A549 (cell line): ENCODE measurements at regions of chr2 and their contacts with region 1.

Region 1: DNA sequence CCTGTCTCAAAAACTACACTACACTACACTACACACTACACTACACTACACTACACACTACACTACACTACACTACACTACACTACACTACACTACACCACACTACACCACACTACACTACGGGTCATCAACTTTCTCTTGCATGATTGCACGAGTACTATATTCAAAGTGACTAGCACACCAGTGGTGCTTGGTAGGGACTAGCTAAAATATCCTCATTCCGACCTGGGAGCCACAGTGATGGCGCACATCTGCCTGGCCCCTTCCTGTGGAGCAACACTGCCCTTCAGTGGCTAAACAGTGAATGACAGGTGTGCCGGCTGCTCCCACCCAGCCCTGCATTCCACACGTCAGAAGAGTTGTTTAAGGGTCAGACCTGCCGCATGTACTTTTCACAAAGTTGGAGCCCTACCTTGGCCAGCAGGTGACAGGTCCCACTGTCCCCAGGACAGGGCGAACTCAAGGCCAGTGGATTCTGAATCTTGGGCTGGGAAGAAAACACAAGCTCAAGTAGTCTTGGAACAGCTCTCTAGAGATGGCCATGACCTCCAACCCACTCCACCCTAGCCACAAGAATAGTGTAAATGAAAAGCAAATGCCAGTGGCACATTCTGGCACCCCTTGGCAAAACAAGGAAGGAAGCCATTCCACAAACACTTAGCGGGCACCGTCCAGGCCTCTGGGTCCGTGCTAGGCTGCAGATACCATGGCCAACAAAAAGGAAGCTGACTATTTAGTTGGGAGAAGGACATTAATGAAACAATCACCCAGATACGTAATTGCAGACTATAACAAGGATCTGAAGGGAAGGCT is 79.7 kb upstream of the MSH2 start:
- DNase-seq: peak; percentile 81 to 92
- ATAC-seq: peak; percentile 89 to 93
- H3K4me3 ChIP-seq: no peak overlapping the region
- H3K27ac ChIP-seq: peak overlapping the region; percentile 48 to 77
- H3K4me1 ChIP-seq: peaks cover 44% of the 10 kb centered on the region
- CTCF ChIP-seq: peak; percentile 97
- EP300 ChIP-seq: no peak
- POLR2A ChIP-seq: no peak
- RAD21 ChIP-seq: peak; percentile 99 to 100

Region 2: DNA sequence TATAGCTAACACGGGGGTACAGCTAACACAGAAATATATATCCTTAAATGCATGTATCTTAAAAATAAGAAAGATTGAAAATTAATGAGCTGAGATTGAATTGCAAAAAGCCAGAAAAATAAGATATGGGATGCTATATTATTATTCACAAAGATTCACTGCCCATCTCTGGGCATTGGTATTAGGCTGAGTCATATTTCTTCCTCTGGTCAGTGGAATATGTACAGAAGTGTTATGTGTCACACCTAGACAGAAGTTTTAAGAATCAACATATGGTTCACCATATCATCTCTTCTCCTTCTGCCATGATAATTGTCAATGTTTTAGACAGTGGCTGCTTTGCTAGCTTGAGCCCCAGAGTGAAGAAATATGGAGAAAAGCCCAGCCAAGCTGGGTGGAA is 393.6 kb before region 1 on chr2:
- CTCF ChIA-PET with region 1: interaction called, 26 read pairs
- POLR2A ChIA-PET with region 1: no interaction called
- DNase-seq: no peak
- ATAC-seq: no peak
- H3K4me3 ChIP-seq: no peak overlapping the region
- H3K27ac ChIP-seq: no peak overlapping the region
- H3K4me1 ChIP-seq: no peaks in the 10 kb centered on the region
- CTCF ChIP-seq: no peak
- EP300 ChIP-seq: no peak
- POLR2A ChIP-seq: no peak
- RAD21 ChIP-seq: no peak

Region 3: GRCh38 chr2:47016172-47016913 is 306.9 kb before region 1 on chr2:
- CTCF ChIA-PET with region 1: interaction called, 106 read pairs
- POLR2A ChIA-PET with region 1: no interaction called
- DNase-seq: peak; percentile 82 to 84
- ATAC-seq: peak; percentile 79 to 81
- H3K4me3 ChIP-seq: no peak overlapping the region
- H3K27ac ChIP-seq: peak overlapping the region; percentile 18 to 78
- H3K4me1 ChIP-seq: peaks cover 29% of the 10 kb centered on the region
- CTCF ChIP-seq: no peak
- EP300 ChIP-seq: no peak
- POLR2A ChIP-seq: no peak
- RAD21 ChIP-seq: peak; percentile 31 to 50; a peak in 3 of 5 replicates

Region 4: DNA sequence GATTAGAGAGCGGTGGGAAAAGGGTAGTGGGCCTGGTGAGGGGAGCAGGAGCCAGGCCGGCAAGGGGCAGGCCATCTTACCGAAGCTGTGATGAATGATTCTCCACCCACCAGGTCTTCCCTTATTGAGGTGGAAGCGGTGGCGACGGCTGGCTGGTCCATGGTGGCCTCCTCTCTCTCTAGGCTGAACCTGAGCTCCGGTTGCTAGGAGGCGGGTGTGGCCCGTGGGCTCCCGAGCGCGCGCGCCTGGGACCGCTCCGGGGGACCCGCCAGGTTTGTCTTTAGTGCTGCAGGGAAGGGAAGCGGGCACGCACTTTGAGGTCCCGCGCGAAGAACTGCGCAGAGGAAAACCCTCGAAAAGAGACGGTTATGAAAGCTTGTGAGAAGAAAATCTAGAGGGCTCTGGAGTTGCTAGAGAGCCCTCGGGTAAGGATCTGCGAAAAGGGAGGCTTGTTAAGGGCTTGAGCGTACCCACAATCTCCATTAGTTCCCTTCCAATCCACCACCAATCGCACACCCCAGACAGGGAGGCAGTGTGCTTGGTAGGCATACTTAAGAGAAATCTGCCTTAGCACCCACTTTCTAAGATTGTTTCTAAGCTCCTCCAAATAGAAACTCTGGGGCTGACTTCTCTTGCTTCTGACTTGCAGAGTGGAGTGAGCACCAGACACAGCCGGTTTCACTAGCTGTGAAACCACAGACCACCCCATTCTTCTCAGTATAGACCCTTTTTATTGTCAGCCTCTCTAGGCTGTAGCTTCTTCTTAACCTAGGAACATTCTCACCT is 167.9 kb before region 1 on chr2 and contains the start of gene STPG4:
- CTCF ChIA-PET with region 1: interaction called, 13 read pairs
- POLR2A ChIA-PET with region 1: no interaction called
- DNase-seq: no peak
- ATAC-seq: peak; percentile 28 to 52; a peak in 5 of 6 replicates
- H3K4me3 ChIP-seq: no peak within 1 kb of the TSS
- H3K27ac ChIP-seq: peak within 1 kb of the TSS in 1 of 2 experiments; percentile 24; a peak in 2 of 6 replicates
- H3K4me1 ChIP-seq: peaks cover 12% of the 10 kb centered on the region; the same call in 2 of the 3 replicates
- CTCF ChIP-seq: no peak
- EP300 ChIP-seq: no peak
- POLR2A ChIP-seq: no peak
- RAD21 ChIP-seq: no peak
- polyA plus RNA-seq, gene STPG4: 0.09 and 0.13 TPM in 2 replicates

Region 5: GRCh38 chr2:47272031-47272864 is 51.0 kb before region 1 on chr2:
- CTCF ChIA-PET with region 1: interaction called, 95 read pairs
- POLR2A ChIA-PET with region 1: no interaction called
- DNase-seq: peak; percentile 86 to 89
- ATAC-seq: peak; percentile 52 to 80
- H3K4me3 ChIP-seq: peak overlapping the region; percentile 41
- H3K27ac ChIP-seq: peak overlapping the region; percentile 85 to 95
- H3K4me1 ChIP-seq: peaks cover 53% of the 10 kb centered on the region
- CTCF ChIP-seq: peak; percentile 99
- EP300 ChIP-seq: 0 out of 5 replicates have a peak, but pooled peaks of 1 of the 2 experiments have one; percentile 25
- POLR2A ChIP-seq: peak; percentile 16; the same call in 1 of the 2 replicates
- RAD21 ChIP-seq: peak; percentile 87 to 99

Region 6: GRCh38 chr2:47344890-47345589 is 21.8 kb after region 1 on chr2:
- CTCF ChIA-PET with region 1: interaction called, 121 read pairs
- POLR2A ChIA-PET with region 1: no interaction called
- DNase-seq: peak; percentile 99
- ATAC-seq: peak; percentile 99
- H3K4me3 ChIP-seq: peak overlapping the region; percentile 44
- H3K27ac ChIP-seq: peak overlapping the region; percentile 82 to 93
- H3K4me1 ChIP-seq: peaks cover 42% of the 10 kb centered on the region
- CTCF ChIP-seq: no peak
- EP300 ChIP-seq: no peak
- POLR2A ChIP-seq: peak; percentile 37
- RAD21 ChIP-seq: peak in 1 of 2 experiments; percentile 10; a peak in 1 of 5 replicates